ENCODE measurements at regions of chr12 and their contacts with region 1.

Region 1: GRCh38 chr12:27434673-27435565 is 11.6 kb upstream of the SMCO2 start:
- DNase-seq: no peak
- H3K4me3 Mint-ChIP-seq: no peak overlapping the region
- H3K27ac Mint-ChIP-seq: peak overlapping the region; percentile 85
- H3K4me1 Mint-ChIP-seq: peaks cover 87% of the 10 kb centered on the region
- H3K27me3 Mint-ChIP-seq: no peaks in the 10 kb centered on the region

Region 2: GRCh38 chr12:27498149-27498548 is 63.2 kb after region 1 on chr12:
- intact Hi-C with region 1: loop called (anchors 1 kb)
- DNase-seq: peak; percentile 16
- H3K4me3 Mint-ChIP-seq: peak overlapping the region; percentile 3
- H3K27ac Mint-ChIP-seq: peak overlapping the region; percentile 76
- H3K4me1 Mint-ChIP-seq: peaks cover 53% of the 10 kb centered on the region
- H3K27me3 Mint-ChIP-seq: no peaks in the 10 kb centered on the region

Region 3: DNA sequence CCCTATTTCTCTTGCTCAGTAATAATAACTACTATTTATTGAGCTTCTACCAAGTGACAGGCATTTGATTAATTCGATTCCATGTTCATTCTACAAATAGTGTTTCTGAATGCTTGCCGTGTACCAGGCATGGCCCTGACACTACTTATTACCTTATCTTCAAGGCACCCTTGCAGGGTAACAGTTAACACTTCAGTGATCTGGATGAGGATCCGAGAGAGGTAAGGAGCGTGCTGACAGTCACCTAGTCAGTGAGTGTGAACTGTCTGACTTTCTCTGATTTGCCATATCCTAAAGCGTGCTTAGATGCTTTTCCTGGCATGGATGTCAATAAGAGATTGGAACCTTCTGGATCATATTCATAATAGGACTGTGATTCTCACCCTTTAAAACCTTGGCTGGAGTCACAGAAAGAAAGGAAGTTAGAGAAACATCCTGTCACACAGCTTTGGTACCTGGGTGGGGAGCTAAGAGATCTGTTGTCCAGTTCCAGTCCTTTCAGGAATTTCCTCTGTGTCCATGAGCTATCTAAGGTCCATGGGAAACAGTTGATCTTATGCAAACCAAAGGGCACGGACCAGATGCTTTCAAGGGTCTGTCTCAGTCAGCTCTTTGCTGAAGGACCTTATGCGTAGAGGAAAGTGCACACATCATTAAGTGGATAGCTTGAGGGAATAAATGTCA is 143.9 kb after region 1 on chr12:
- intact Hi-C with region 1: loop called (anchors 5 kb)
- DNase-seq: no peak
- H3K4me3 Mint-ChIP-seq: no peak overlapping the region
- H3K27ac Mint-ChIP-seq: no peak overlapping the region
- H3K4me1 Mint-ChIP-seq: peaks cover 65% of the 10 kb centered on the region
- H3K27me3 Mint-ChIP-seq: no peaks in the 10 kb centered on the region

Region 4: GRCh38 chr12:27652174-27652763 is 217.3 kb after region 1 on chr12:
- intact Hi-C with region 1: loop called (anchors 1 kb)
- DNase-seq: peak; percentile 23
- H3K4me3 Mint-ChIP-seq: no peak overlapping the region
- H3K27ac Mint-ChIP-seq: no peak overlapping the region
- H3K4me1 Mint-ChIP-seq: peaks cover 42% of the 10 kb centered on the region
- H3K27me3 Mint-ChIP-seq: no peaks in the 10 kb centered on the region

Measured in activated T-helper 1 cell treated with anti-CD3 and anti-CD28 coated beads, Interleukin-12 subunit alpha, Interleukin-12 subunit beta, Interleukin-2, Interleukin-4 antibody, amounts not matched to agents 30 ng/mL and 10 ng/mL and 1 ng/mL, durations not matched to agents 14 hours and 24 hours and 36 hours (primary cell).